Naive thymus-derived CD4-positive, alpha-beta T cell (primary cell): ENCODE measurements at regions of chr3 and their contacts with region 1.

Region 1: DNA sequence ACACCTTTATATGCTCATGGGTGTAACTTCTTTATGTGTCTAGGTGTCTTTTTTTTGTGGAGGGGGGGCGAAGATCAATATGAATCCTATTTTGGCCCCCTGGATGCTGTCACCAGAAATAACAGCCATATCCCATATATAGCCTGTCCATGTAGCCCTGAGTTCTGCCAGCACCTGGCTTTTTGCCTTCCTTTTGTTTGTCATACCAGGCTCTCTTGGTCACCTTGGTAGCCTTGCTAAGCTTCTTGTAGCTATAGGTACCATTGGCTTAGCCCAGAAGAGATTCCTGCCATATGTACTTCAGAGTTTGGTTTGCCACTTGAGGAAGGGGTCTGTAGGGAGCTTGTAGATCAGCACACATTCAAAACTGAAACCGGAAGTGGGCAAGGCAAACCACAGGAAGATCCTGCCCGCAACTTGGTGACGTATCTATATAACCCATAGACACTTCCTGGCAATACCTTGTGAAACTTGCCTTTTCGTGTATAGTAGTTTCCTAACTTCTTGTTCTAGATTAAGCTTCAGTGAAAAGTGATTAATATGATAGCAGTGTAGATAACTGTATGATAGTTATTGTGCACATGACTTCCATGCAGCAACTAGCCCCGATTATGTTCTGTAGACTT is 11.9 kb downstream of the RASA2 start:
- DNase-seq: peak; percentile 34 to 96 (median 94)
- ATAC-seq: peak; percentile 91
- H3K4me3 ChIP-seq: peak overlapping the region; percentile 52
- H3K4me3 Mint-ChIP-seq: peak overlapping the region in 9 of 10 donors; percentile 68 to 89 (median 82)
- H3K27ac ChIP-seq: peak overlapping the region; percentile 73
- H3K27ac Mint-ChIP-seq: peak overlapping the region in 5 of 9 donors; percentile 93 to 99 (median 96)
- H3K4me1 ChIP-seq: peaks cover 66 to 69% of the 10 kb centered on the region in 2 donors
- H3K4me1 Mint-ChIP-seq: peaks cover 32 to 76% (median 50%) of the 10 kb centered on the region in 7 donors
- H3K27me3 ChIP-seq: no peaks in the 10 kb centered on the region
- H3K27me3 Mint-ChIP-seq: no peaks in the 10 kb centered on the region

Region 2: DNA sequence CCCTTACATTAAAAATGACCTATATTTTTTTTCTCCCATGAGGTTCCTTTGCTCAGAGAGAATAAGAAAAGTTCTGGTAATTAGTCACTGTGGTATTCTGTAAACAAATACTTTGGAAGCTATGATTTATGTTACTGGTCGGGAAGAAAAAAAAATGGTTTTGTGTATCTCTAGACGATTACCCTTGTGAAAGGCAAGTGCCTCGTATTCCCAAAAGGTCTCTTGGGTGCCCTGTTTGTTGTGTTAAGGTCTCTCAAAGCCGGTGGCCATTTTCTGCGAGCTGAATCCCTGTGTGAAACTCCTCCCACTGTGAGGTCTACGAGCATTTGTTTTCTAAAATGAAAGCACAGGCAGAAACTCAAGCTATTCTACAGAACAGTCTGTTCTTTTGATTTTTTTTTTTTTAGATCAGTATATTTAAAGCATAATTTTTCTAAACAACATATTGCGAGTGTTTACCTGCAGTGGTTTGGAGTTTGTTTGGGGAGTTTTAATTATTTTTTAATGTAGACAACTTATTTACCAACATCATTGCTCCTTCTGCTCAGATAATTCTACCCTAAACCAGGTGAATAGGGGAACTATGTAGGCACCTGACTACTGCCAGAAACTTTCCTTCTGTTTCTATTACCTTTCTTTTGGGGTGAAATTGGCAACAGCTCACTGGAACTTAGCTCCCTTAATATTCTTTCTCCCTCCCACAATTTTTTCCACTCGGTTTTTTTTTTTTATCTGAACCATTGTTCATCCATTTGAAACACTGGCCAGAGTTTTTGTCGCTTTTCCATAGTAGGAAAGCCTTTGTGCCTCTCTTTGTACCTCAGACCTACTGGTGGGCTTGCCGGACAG is 86.4 kb before region 1 on chr3:
- CTCF ChIA-PET with region 1: no interaction called
- POLR2A ChIA-PET with region 1: no interaction called
- intact Hi-C with region 1: loop called in 1 of 2 experiments (anchors 5 kb)
- DNase-seq: peak in 7 of 9 donors; percentile 54 to 76 (median 69)
- ATAC-seq: peak; percentile 78
- H3K4me3 ChIP-seq: peak overlapping the region; percentile 26
- H3K4me3 Mint-ChIP-seq: peak overlapping the region; percentile 62 to 91 (median 86)
- H3K27ac ChIP-seq: peak overlapping the region; percentile 83
- H3K27ac Mint-ChIP-seq: peak overlapping the region; percentile 96 to 100 (median 99)
- H3K4me1 ChIP-seq: peaks cover 59 to 74% of the 10 kb centered on the region in 2 donors
- H3K4me1 Mint-ChIP-seq: peaks cover 52 to 87% (median 74%) of the 10 kb centered on the region in 7 donors
- H3K27me3 ChIP-seq: no peaks in the 10 kb centered on the region
- H3K27me3 Mint-ChIP-seq: no peaks in the 10 kb centered on the region

Region 3: DNA sequence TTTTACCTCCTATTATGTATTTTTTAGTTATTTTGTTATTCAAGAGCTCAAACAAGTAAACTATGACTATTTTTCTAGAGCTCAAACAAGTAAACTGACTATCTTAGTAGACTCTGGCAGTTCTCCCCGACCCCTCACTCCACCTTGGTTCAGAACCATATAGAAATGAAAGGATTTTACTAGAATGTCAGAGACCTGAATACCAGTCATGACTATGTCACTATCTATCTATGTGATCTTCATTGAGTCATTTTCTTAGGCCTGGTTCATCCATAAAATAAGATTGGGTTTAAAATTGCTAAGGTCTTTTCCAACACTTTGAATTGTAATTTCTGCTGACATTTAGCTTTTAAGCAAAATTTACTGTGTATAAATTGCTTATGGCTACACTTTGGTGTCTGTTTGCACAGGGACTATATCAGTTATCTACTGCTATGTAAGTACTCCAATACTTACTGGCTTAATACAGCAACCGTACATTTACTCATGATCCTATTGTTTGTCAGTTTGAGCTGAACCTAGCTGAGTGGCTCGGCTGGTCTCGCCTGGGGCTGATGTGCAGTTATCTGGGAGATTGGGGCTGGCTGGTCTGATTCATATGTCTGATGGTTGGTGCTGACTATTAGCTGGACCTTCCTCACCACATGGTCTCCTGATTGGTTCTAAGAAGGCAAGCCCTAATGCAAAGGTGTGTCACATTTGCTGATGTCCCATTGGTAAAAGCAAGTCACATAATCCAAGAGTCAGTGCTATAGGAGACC is 25.1 kb after region 1 on chr3:
- CTCF ChIA-PET with region 1: interaction called, 3 read pairs
- POLR2A ChIA-PET with region 1: interaction called, 5 read pairs
- intact Hi-C with region 1: loop called (anchors 1 to 2 kb)
- DNase-seq: no peak
- ATAC-seq: no peak
- H3K4me3 ChIP-seq: no peak overlapping the region
- H3K4me3 Mint-ChIP-seq: peak overlapping the region in 6 of 10 donors; percentile 3 to 74 (median 27)
- H3K27ac ChIP-seq: no peak overlapping the region
- H3K27ac Mint-ChIP-seq: peak overlapping the region in 8 of 9 donors; percentile 76 to 93 (median 87)
- H3K4me1 ChIP-seq: peaks cover 12 to 47% of the 10 kb centered on the region in 2 donors
- H3K4me1 Mint-ChIP-seq: peaks cover 38 to 97% (median 85%) of the 10 kb centered on the region in 7 donors
- H3K27me3 ChIP-seq: no peaks in the 10 kb centered on the region
- H3K27me3 Mint-ChIP-seq: no peaks in the 10 kb centered on the region

Region 4: GRCh38 chr3:141544697-141545096 is 46.0 kb after region 1 on chr3:
- CTCF ChIA-PET with region 1: interaction called, 5 read pairs
- POLR2A ChIA-PET with region 1: interaction called, 3 read pairs
- intact Hi-C with region 1: loop called in 1 of 2 experiments (anchors 2 kb)
- DNase-seq: peak in 7 of 9 donors; percentile 10 to 51 (median 38)
- ATAC-seq: peak; percentile 79
- H3K4me3 ChIP-seq: no peak overlapping the region
- H3K4me3 Mint-ChIP-seq: peak overlapping the region; percentile 49 to 86 (median 63)
- H3K27ac ChIP-seq: peak overlapping the region; percentile 34
- H3K27ac Mint-ChIP-seq: peak overlapping the region; percentile 56 to 96 (median 89)
- H3K4me1 ChIP-seq: peaks cover 11 to 13% of the 10 kb centered on the region in 2 donors
- H3K4me1 Mint-ChIP-seq: peaks cover 44 to 93% (median 90%) of the 10 kb centered on the region in 7 donors
- H3K27me3 ChIP-seq: no peaks in the 10 kb centered on the region
- H3K27me3 Mint-ChIP-seq: no peaks in the 10 kb centered on the region

Region 5: GRCh38 chr3:141561426-141562034 is 62.8 kb after region 1 on chr3:
- CTCF ChIA-PET with region 1: interaction called, 5 read pairs
- POLR2A ChIA-PET with region 1: interaction called, 7 read pairs
- intact Hi-C with region 1: loop called in 1 of 2 experiments (anchors 1 kb)
- DNase-seq: peak in 7 of 9 donors; percentile 59 to 78 (median 73)
- ATAC-seq: peak; percentile 80
- H3K4me3 ChIP-seq: no peak overlapping the region
- H3K4me3 Mint-ChIP-seq: peak overlapping the region in 4 of 10 donors; percentile 17 to 54 (median 32)
- H3K27ac ChIP-seq: peak overlapping the region; percentile 25
- H3K27ac Mint-ChIP-seq: peak overlapping the region in 8 of 9 donors; percentile 55 to 89 (median 76)
- H3K4me1 ChIP-seq: peaks cover 0 to 37% of the 10 kb centered on the region in 2 donors
- H3K4me1 Mint-ChIP-seq: peaks cover 11 to 47% (median 24%) of the 10 kb centered on the region in 7 donors
- H3K27me3 ChIP-seq: no peaks in the 10 kb centered on the region
- H3K27me3 Mint-ChIP-seq: no peaks in the 10 kb centered on the region

Region 6: GRCh38 chr3:141575879-141576743 is 77.4 kb after region 1 on chr3:
- CTCF ChIA-PET with region 1: no interaction called
- POLR2A ChIA-PET with region 1: no interaction called
- intact Hi-C with region 1: no loop called
- DNase-seq: peak in 4 of 9 donors; percentile 14 to 44 (median 41)
- ATAC-seq: peak; percentile 82
- H3K4me3 ChIP-seq: no peak overlapping the region
- H3K4me3 Mint-ChIP-seq: peak overlapping the region in 8 of 10 donors; percentile 7 to 64 (median 48)
- H3K27ac ChIP-seq: peak overlapping the region; percentile 47
- H3K27ac Mint-ChIP-seq: peak overlapping the region; percentile 36 to 88 (median 69)
- H3K4me1 ChIP-seq: no peaks in the 10 kb centered on the region
- H3K4me1 Mint-ChIP-seq: peaks cover 8 to 17% (median 12%) of the 10 kb centered on the region in 7 donors
- H3K27me3 ChIP-seq: no peaks in the 10 kb centered on the region
- H3K27me3 Mint-ChIP-seq: no peaks in the 10 kb centered on the region

Region 7: DNA sequence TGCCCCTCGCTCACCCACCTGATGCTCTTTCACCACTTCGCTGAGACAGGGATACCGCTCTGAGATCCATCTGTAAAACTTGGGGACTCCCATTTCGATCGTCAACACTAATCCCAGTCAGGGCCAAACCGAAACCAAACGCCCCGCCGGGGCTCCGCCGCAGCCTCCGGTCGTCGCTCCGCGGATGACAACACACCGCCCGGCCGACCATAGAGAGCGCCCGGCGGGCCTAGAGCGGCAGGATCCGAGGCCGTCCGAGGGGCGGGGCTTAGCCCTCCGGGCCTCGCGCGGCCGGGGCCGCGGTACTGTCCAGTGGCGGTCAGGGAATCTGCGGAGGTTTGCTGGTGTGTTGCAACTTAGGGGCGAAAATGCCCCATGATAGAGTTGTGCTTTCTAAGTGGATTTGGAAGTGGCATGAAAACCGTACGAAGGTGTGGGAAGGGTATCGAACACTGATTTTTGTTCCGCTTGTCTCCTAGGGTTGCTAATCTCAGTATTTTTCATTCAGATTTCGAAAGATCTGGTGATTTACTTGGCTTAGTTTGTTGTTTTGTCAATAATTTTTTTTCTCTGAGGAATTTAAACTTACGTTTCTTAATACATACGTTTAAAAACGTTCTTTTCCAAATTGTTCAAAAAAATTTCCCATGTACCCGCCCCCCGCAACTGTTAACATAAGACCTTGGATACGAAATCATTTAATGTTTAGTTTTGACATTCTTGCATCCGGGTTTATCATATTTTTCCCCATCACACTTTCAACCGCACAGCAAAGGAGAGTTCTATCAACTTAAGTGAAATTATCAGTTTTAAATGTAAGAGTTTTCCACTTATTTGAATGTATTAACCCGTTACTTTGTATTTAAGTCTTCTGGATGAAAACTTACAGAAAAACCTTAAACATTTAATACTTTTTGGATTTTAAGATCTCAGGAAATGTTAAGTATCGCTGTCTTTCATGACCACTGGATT is 949.4 kb after region 1 on chr3 and contains the start of gene XRN1:
- CTCF ChIA-PET with region 1: no interaction called
- POLR2A ChIA-PET with region 1: no interaction called
- intact Hi-C with region 1: loop called in 1 of 2 experiments (anchors 5 kb)
- DNase-seq: peak; percentile 90 to 97 (median 94)
- ATAC-seq: peak; percentile 99
- H3K4me3 ChIP-seq: peak within 1 kb of the TSS; percentile 78
- H3K4me3 Mint-ChIP-seq: peak within 1 kb of the TSS; percentile 89 to 100 (median 98)
- H3K27ac ChIP-seq: peak within 1 kb of the TSS; percentile 99
- H3K27ac Mint-ChIP-seq: peak within 1 kb of the TSS; percentile 98 to 100 (median 99)
- H3K4me1 ChIP-seq: peaks cover 31% of the 10 kb centered on the region in 2 donors
- H3K4me1 Mint-ChIP-seq: peaks cover 26 to 55% (median 51%) of the 10 kb centered on the region in 7 donors
- H3K27me3 ChIP-seq: no peaks in the 10 kb centered on the region
- H3K27me3 Mint-ChIP-seq: no peaks in the 10 kb centered on the region
- total RNA-seq, gene XRN1: 86.1 to 123 (median 103) TPM